ENCODE measurements at regions of chr12 and their contacts with region 1.

Region 1: DNA sequence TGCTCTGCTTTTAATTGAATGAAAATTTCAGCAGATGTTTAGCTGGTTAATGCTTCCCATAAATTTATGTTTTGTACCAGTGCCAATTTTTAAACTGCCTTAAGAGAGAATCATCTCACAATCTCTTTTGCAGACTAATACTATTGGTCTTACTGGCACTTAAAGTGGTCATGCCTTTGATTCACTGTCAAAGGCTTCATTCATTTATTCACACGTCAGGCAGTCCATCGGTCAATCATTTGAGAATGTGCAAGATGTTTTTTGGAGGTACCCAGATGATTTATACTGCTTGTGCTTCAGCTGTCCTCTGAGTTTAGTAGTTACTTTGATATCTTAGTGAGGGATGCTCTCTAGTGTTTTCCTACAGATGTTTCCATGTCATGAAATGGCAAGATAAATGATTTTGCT is 83.4 kb downstream of the NAV3 start:
- DNase-seq: no peak
- ATAC-seq: no peak
- H3K4me3 ChIP-seq: no peak overlapping the region
- H3K27ac ChIP-seq: no peak overlapping the region
- H3K4me1 ChIP-seq: no peaks in the 10 kb centered on the region
- H3K27me3 ChIP-seq: peaks cover 11% of the 10 kb centered on the region; the same call in 1 of the 2 replicates
- CTCF ChIP-seq: no peak

Region 2: DNA sequence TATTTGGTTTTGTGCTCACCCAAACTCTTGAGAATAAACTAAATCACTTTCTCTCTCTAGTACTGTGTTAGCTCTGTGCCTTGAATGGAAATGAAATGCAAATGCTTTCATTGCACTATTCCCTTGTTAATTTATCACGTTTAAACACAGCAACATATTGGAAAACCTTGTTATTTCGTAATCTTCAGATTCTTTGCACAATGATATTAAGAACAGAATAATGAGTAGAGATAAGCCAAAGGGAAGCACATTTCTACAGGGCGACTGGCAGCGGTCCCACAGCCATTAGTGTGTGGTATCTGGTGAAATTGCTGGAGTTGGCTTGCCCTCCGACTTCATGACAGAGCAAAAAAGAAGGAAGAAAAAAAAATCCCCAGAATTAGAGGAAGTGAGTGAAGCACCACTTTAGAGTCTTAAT is 682.6 kb before region 1 on chr12:
- CTCF ChIA-PET with region 1: no interaction called
- POLR2A ChIA-PET with region 1: no interaction called
- intact Hi-C with region 1: no loop called
- DNase-seq: no peak
- ATAC-seq: no peak
- H3K4me3 ChIP-seq: no peak overlapping the region
- H3K27ac ChIP-seq: no peak overlapping the region
- H3K4me1 ChIP-seq: no peaks in the 10 kb centered on the region
- H3K27me3 ChIP-seq: peaks cover 46% of the 10 kb centered on the region
- CTCF ChIP-seq: no peak

Region 3: DNA sequence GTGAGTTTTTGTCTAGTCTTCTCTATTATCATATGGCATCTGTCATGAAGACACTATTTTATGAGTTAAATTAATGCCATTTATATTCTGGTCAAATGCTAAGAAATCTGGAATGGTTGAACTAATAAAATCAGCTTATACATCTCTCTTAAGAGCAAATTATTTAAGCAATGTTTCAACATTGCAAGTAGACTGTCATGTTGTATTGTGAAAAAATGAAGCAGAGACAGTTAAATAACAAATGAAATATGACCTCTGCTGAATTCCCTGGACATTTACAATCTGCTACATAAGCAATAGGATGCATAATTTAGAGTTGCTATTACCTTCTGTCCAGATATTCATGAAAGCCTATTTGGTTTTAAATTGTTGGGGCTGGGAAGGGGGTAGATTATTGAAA is 52.8 kb before region 1 on chr12:
- CTCF ChIA-PET with region 1: no interaction called
- POLR2A ChIA-PET with region 1: no interaction called
- intact Hi-C with region 1: loop called (anchors 5 kb)
- DNase-seq: no peak
- ATAC-seq: no peak
- H3K4me3 ChIP-seq: no peak overlapping the region
- H3K27ac ChIP-seq: no peak overlapping the region
- H3K4me1 ChIP-seq: no peaks in the 10 kb centered on the region
- H3K27me3 ChIP-seq: peaks cover 15% of the 10 kb centered on the region
- CTCF ChIP-seq: no peak